ENCODE measurements at regions of chr11 and their contacts with region 1.

Region 1: GRCh38 chr11:124644426-124645280 is 22.0 kb downstream of the TBRG1 start:
- DNase-seq: peak; percentile 67
- ATAC-seq: peak; percentile 83
- H3K4me3 ChIP-seq: no peak overlapping the region
- H3K4me3 Mint-ChIP-seq: peak overlapping the region; percentile 2
- H3K27ac ChIP-seq: no peak overlapping the region
- H3K27ac Mint-ChIP-seq: no peak overlapping the region
- H3K4me1 ChIP-seq: peaks cover 14 to 16% of the 10 kb centered on the region in 2 donors
- H3K4me1 Mint-ChIP-seq: peaks cover 16% of the 10 kb centered on the region
- H3K27me3 ChIP-seq: no peaks in the 10 kb centered on the region
- H3K27me3 Mint-ChIP-seq: no peaks in the 10 kb centered on the region
- CTCF ChIP-seq: peak; percentile 82

Region 2: DNA sequence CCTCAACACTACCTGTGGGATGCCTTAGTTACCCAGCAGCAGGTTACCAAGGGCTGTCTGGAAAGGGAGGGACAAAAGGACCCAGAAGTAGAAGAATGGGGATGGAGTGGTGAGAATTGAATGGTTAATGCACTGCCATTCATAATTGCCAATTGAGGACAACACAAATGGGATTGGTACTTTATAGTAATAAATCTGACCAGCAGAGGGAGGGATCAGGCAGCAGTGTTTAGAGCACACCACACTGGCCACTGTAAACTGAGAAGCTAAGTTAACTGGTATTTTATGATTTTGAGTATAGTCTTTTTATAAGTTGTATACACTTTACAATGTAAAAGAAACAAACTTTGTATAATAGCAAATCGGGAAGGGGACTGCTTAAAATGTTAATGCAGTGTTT is 11.3 kb before region 1 on chr11:
- CTCF ChIA-PET with region 1: interaction called, 13 read pairs
- POLR2A ChIA-PET with region 1: no interaction called
- intact Hi-C with region 1: no loop called
- DNase-seq: no peak
- ATAC-seq: no peak
- H3K4me3 ChIP-seq: no peak overlapping the region
- H3K4me3 Mint-ChIP-seq: no peak overlapping the region
- H3K27ac ChIP-seq: no peak overlapping the region
- H3K27ac Mint-ChIP-seq: no peak overlapping the region
- H3K4me1 ChIP-seq: no peaks in the 10 kb centered on the region
- H3K4me1 Mint-ChIP-seq: peaks cover 2% of the 10 kb centered on the region
- H3K27me3 ChIP-seq: no peaks in the 10 kb centered on the region
- H3K27me3 Mint-ChIP-seq: no peaks in the 10 kb centered on the region
- CTCF ChIP-seq: no peak

Region 3: GRCh38 chr11:124793466-124794278 is 149.0 kb after region 1 on chr11:
- CTCF ChIA-PET with region 1: interaction called, 11 read pairs
- POLR2A ChIA-PET with region 1: no interaction called
- intact Hi-C with region 1: no loop called
- DNase-seq: peak; percentile 67
- ATAC-seq: no peak
- H3K4me3 ChIP-seq: no peak overlapping the region
- H3K4me3 Mint-ChIP-seq: no peak overlapping the region
- H3K27ac ChIP-seq: no peak overlapping the region
- H3K27ac Mint-ChIP-seq: no peak overlapping the region
- H3K4me1 ChIP-seq: peaks cover 3 to 8% of the 10 kb centered on the region in 2 donors
- H3K4me1 Mint-ChIP-seq: peaks cover 21% of the 10 kb centered on the region
- H3K27me3 ChIP-seq: no peaks in the 10 kb centered on the region
- H3K27me3 Mint-ChIP-seq: no peaks in the 10 kb centered on the region
- CTCF ChIP-seq: peak; percentile 78

Region 4: DNA sequence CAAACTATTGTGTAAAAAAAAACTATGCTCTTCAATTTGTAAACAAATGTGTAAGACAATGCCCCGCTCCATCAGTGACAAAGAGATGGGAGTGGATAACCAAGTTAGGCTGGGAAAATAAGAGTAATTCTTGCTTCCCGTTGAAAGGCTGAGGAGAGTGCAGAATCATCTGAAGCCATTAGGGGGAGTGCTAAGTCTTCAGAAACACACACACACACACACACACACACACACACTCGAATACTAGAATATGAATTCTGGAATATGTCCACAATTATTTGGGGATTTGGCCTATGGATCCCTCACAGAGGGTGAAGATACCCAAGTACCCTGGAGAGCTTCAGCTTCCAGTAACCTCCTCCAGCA is 192.8 kb after region 1 on chr11:
- CTCF ChIA-PET with region 1: interaction called, 61 read pairs
- POLR2A ChIA-PET with region 1: no interaction called
- intact Hi-C with region 1: loop called (anchors 1 kb)
- DNase-seq: peak; percentile 43
- ATAC-seq: no peak
- H3K4me3 ChIP-seq: no peak overlapping the region
- H3K4me3 Mint-ChIP-seq: no peak overlapping the region
- H3K27ac ChIP-seq: no peak overlapping the region
- H3K27ac Mint-ChIP-seq: no peak overlapping the region
- H3K4me1 ChIP-seq: peaks cover 24 to 30% of the 10 kb centered on the region in 2 donors
- H3K4me1 Mint-ChIP-seq: peaks cover 18% of the 10 kb centered on the region
- H3K27me3 ChIP-seq: peaks cover 0 to 53% (median 42%) of the 10 kb centered on the region in 4 experiments
- H3K27me3 Mint-ChIP-seq: peaks cover 62% of the 10 kb centered on the region
- CTCF ChIP-seq: no peak

Region 5: DNA sequence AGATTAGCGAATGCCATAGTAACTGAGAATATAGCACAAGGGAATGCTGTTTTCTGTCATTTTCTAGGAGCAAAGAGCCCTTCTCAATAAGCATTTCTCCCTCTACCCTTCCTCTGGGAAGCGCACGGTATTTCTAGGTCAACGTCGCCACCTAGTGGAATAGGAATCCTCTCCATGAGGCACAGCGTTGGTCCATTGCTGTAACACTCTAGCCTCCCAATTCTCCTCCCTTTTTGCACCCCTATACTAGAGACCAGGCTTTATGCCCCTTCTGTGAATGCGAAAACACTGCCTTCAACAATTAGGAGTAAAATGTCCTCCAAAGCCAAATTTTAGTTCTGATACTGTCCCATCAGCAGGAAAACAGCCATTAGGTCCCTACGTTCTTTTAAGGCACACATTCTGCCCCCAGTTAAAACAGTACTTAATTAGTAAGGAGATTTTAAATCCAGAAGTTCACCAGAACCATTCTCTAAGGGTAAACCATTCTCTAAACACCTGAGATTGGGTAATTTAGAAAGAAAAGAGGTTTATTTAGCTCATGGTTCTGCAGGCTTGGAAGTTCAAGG is 1230.0 kb after region 1 on chr11:
- CTCF ChIA-PET with region 1: no interaction called
- POLR2A ChIA-PET with region 1: no interaction called
- intact Hi-C with region 1: loop called (anchors 10 kb)
- DNase-seq: peak; percentile 63
- ATAC-seq: peak; percentile 49
- H3K4me3 ChIP-seq: no peak overlapping the region
- H3K4me3 Mint-ChIP-seq: no peak overlapping the region
- H3K27ac ChIP-seq: no peak overlapping the region
- H3K27ac Mint-ChIP-seq: no peak overlapping the region
- H3K4me1 ChIP-seq: peaks cover 0 to 3% of the 10 kb centered on the region in 2 donors
- H3K4me1 Mint-ChIP-seq: peaks cover 10% of the 10 kb centered on the region
- H3K27me3 ChIP-seq: no peaks in the 10 kb centered on the region
- H3K27me3 Mint-ChIP-seq: no peaks in the 10 kb centered on the region
- CTCF ChIP-seq: peak; percentile 74